ENCODE measurements at regions of chrX and their contacts with region 1.

Region 1: GRCh38 chrX:68732906-68733493 is 85.5 kb downstream of the STARD8 start:
- DNase-seq: peak in 1 of 2 donors; percentile 74
- ATAC-seq: peak; percentile 80

Region 2: DNA sequence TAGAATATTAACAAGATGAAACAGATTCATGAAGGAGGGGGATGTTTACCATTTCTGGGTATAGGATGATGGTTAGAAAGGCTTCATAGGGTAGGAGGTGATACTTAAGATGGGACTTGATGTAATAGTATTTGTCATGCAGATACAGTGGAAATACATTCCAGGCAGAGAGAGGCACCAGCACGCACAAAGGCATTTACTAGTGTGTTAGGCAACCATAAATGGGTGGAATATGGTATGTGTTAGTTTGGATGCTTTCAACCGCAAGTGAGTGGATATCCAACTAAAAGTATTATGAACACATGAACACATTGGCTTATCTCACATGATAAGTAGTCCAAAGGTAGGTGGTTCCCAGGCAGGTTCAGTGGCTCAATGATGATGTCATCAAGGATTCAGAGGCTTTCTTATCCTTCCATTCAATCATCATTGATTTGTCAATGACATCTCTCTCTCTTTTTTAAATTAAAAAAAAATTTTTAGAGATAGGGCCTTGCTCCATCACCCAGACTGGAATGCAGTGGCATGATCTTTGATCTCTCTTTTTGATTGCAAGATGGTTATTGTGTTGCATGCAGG is 98.3 kb before region 1 on chrX:
- intact Hi-C with region 1: no loop called
- DNase-seq: no peak
- ATAC-seq: no peak

Region 3: DNA sequence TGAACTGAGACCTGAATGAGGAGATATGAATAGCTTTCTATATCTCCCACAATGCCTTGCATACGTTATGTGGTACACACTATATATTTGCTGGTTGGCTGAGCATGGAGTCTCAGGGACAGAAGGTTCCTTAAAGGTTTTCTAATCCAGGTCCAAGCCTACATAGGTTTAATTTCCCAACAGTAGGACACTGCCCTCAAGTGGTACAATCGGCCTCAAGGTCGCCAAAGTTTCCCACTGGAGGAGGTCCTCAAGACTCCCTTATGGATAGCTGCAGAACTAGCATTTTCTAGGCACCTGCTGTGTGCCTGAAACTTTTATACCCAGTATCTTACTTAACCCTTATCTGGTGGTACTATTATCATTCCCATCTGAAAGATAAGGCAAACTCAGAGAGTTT is 74.8 kb after region 1 on chrX:
- intact Hi-C with region 1: loop called in 1 of 2 experiments (anchors 10 kb)
- DNase-seq: no peak
- ATAC-seq: no peak